Activated CD4-positive, alpha-beta T cell treated with anti-CD3 and anti-CD28 coated beads, Interleukin-2, amount 10 ng/mL, durations not matched to agents 24 days and 14 days (primary cell): ENCODE measurements at regions of chr6 and their contacts with region 1.

Region 1: GRCh38 chr6:27188885-27189418 is 58.5 kb upstream of the PRSS16 start:
- DNase-seq: peak; percentile 86
- H3K4me3 Mint-ChIP-seq: peak overlapping the region; percentile 92
- H3K27ac Mint-ChIP-seq: no peak overlapping the region
- H3K4me1 Mint-ChIP-seq: peaks cover 10% of the 10 kb centered on the region
- H3K27me3 Mint-ChIP-seq: peaks cover 6% of the 10 kb centered on the region

Region 2: DNA sequence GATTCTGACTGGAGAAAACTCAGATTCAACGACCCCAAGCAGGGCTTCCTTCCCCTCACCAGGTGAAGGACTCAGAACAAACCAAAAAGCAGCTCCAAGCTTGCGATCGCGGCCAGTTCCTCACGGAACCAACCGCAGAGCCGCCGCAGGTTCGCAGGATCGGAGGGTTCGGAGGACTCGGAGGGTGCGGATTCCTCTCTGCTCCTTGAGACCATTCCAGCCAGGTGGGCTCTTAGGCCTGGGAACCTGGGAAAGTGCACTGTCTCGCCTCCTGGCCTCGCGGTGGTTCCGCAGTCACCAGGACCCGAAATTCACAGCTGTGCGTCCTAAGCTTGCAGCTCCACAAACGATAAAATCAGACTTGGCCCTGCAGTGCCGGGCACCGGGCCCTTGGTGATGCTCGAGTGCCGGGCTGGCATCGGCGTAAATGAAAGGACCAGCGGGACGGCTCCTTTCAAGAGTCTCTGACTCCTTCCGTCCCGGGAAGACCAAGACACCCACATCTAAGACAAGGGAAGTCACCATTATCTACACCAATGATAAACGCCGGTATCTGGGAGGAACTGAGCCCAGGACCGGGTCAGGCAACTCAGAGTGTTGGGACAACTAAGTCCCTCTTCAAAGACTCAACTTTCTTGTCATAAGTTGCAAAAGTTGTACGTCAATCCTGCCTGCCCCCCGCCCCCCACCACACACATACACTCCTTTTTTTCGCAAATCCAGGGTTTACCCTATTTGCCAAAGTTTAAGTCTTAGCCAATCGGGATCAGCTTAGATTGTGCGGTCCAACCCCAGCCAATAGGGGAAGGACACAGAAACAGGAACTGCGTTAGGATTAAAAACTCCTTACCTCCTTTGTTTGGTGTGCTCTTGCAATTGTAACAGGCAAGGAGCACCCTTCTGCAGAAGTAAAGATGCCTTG is 11.2 kb before region 1 on chr6:
- intact Hi-C with region 1: loop called (anchors 1 kb)
- DNase-seq: peak; percentile 92
- H3K4me3 Mint-ChIP-seq: peak overlapping the region; percentile 95
- H3K27ac Mint-ChIP-seq: peak overlapping the region; percentile 93
- H3K4me1 Mint-ChIP-seq: peaks cover 17% of the 10 kb centered on the region
- H3K27me3 Mint-ChIP-seq: peaks cover 33% of the 10 kb centered on the region

Region 3: DNA sequence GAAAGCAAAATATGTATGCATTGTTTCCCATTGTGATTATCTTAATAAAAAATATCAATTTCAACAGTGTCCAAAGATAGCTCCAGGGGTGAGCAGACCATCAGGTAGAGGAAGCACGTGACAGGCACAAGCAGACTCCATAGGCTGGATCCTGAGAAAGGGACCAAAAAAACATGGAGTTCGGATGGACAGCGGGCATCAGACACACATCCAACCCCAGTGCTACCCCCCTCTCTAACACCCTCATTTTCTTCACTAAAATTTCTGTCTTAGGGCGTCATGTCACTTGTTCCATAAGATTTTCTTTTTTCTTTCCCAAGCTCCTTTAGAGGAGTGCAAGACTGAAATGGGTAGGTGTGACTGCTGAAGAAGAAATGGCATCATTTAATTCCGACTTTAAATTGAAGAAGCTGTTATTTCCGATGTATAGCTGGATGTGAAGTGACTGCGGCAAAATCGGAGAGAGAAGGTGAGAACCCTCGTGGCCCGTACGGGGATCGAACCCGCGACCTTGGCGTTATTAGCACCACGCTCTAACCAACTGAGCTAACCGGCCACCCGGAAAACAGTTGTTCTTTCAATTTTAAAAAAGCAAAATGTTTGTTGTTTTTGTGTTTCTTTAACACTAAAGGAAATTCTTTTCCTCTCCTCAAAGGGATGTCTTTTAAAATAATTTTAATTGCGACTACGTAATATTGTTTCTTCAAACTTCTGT is 48.3 kb after region 1 on chr6:
- intact Hi-C with region 1: loop called (anchors 1 kb)
- DNase-seq: peak; percentile 76
- H3K4me3 Mint-ChIP-seq: peak overlapping the region; percentile 71
- H3K27ac Mint-ChIP-seq: peak overlapping the region; percentile 65
- H3K4me1 Mint-ChIP-seq: peaks cover 20% of the 10 kb centered on the region
- H3K27me3 Mint-ChIP-seq: peaks cover 54% of the 10 kb centered on the region

Region 4: GRCh38 chr6:27312146-27312949 is 123.4 kb after region 1 on chr6 and contains the start of gene POM121L2:
- intact Hi-C with region 1: loop called (anchors 2 kb)
- DNase-seq: peak; percentile 88
- H3K4me3 Mint-ChIP-seq: peak within 1 kb of the TSS; percentile 85
- H3K27ac Mint-ChIP-seq: peak within 1 kb of the TSS; percentile 9
- H3K4me1 Mint-ChIP-seq: peaks cover 8% of the 10 kb centered on the region
- H3K27me3 Mint-ChIP-seq: peaks cover 70% of the 10 kb centered on the region
- total RNA-seq, gene POM121L2: not detected in 2 replicates

Region 5: DNA sequence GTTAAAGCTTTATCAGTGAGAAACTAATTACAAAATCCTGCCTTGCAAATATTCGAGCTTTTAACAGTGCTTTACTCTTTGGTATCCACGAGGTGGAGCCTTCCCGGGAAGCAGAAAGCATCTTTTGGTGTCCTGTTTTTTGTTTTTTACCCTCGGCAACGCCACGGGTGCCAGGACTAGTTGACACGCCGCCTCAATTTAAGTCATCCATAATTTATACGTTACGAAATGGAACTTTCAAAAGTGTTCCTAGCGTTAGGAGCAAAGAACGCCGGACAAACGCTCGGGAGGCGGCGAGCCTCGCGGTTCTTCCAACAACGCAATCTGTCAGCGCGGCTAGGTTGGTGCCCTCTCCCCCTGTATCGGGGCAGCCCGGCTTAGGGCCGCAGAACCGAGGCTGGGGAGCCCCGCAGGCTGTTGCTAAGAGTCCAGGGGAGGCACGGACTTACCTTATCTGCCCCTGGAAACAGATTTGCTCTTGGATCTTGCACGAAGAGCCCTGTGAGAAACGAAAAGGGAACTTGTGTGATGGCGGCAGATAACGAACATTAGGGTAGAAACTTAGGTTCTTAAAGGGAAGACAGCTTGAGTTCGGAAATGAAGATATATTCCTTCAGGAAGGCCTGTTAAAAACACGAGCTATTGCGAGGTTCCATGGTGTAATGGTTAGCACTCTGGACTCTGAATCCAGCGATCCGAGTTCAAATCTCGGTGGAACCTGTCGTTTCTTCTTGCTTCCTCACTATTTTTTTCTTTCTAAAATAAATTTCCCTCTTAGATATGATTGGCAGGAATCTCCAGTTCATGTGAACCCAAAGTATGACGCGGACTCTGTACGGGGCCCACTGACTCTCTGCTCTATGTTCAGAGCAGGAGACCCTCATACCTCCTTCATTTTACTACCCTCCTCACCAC is 330.2 kb after region 1 on chr6:
- intact Hi-C with region 1: loop called (anchors 2 kb)
- DNase-seq: peak; percentile 84
- H3K4me3 Mint-ChIP-seq: peak overlapping the region; percentile 93
- H3K27ac Mint-ChIP-seq: peak overlapping the region; percentile 85
- H3K4me1 Mint-ChIP-seq: peaks cover 13% of the 10 kb centered on the region
- H3K27me3 Mint-ChIP-seq: peaks cover 33% of the 10 kb centered on the region

Region 6: DNA sequence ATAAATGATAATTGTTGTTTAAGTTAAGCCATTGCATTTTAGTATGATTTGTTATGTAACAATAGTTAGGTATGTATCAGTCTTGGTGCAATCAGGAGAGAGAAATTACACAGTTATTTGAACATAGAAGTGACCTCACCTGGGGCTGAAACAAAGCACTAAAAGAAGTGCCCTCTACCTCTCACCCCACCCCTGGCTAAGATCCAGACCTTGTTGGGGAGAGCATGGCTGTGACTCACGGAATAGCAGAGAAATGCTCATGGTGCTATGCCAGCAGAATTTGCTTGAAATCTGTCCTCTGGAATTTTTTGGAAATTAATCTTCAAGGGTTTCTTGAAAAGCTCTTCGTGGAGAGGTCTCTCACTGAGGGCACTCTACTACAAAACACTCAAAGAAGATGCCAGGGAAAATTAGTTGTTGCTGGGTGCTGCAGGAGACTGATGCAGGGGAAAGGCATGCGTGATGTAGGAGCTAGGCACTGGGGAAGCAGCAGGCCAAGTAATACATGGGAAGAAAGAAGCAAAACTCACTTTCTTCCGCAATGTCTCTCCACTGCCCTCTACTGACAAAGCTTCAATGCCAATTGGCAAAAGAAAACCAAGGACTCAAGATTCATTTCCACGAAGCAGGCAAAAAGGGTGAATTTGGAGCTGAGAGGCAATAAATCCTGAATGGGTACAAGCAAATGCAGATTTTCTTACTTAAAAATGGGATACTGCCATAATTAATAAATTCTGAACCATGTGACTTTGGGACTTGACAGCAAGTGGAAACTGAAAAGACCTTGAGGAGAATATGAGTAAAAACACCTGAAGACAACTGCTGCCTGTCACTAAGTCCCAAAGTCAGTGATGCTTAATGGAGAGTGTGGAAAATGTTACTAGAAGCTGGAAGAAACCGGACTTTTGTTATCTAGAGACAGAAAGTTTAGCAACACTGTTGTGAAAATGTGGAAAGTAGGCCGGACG is 420.2 kb after region 1 on chr6:
- intact Hi-C with region 1: loop called (anchors 2 kb)
- DNase-seq: peak; percentile 76
- H3K4me3 Mint-ChIP-seq: no peak overlapping the region
- H3K27ac Mint-ChIP-seq: no peak overlapping the region
- H3K4me1 Mint-ChIP-seq: peaks cover 15% of the 10 kb centered on the region
- H3K27me3 Mint-ChIP-seq: peaks cover 28% of the 10 kb centered on the region